CD8-positive, alpha-beta T cell (primary cell): ENCODE measurements at regions of chr12 and their contacts with region 1.

Region 1: DNA sequence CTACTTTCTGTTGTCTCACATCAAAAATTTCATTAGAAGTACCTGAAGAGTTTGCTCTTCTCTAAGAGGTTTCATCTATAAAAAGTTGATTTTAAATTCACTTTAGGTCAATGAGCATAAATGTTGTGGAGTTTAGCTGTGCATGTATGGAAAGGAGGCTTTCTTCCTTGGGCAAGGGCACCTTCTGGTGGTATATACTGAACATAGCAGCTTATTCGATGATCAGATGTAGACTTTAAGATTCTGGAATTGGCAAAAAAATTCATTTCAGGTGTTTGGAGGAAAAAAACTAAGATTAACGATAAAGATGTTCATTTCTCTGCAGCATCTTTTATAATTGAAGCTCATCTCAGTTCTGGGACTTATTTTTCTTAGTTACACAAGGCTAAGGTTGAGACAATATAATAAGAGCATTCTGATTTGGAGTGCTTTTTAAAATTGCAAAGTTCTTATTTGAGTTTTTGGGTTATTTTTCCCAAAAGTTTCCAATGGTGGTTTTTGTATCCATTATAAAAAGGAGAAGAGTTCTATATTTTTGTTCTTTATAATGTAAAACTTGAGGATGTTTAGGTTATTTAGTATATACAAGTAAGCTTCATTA is 46.8 kb downstream of the TMEM117 start:
- DNase-seq: peak in 5 of 9 experiments; percentile 9 to 72 (median 29)
- ATAC-seq: peak; percentile 96
- H3K4me3 ChIP-seq: no peak overlapping the region
- H3K4me3 Mint-ChIP-seq: no peak overlapping the region
- H3K27ac ChIP-seq: no peak overlapping the region
- H3K27ac Mint-ChIP-seq: no peak overlapping the region
- H3K4me1 ChIP-seq: no peaks in the 10 kb centered on the region
- H3K4me1 Mint-ChIP-seq: no peaks in the 10 kb centered on the region
- H3K27me3 ChIP-seq: no peaks in the 10 kb centered on the region
- H3K27me3 Mint-ChIP-seq: no peaks in the 10 kb centered on the region
- CTCF ChIP-seq: peak; percentile 94

Region 2: DNA sequence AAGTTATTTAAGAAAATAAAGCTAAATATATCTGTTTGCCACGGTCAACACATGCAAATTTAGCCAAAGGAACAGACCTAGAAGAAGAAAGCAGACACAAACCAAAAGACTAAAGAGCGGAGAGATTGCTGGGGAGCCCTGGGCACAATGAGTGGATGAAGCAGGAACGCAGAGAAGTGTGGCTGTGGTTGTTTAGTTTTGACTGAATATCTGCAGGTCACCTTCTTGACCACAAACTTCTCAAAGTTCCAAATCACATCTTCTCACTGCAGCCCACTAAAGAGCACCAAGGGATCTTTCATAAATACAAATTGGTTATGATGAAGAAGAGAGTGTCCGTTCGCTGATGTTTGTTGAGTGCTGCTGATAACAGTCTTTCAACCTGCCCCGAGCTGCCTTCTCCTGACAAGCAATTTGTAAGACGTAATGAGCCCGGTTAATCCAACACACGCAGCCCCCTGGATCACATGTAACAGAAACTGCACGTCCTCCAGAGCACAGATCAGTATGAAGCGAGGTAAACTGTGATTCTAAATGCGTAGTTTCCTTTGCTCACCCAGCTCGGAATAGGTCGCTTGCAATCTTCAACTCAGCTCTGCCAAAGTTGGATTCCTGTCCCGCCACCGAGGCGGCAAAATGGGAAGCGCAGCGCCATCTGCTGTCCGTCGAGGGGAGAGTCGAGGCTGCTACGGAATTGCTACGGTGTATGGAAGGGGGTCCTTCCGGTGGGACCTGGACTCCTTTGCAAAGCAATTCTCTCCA is 1858.8 kb before region 1 on chr12:
- CTCF ChIA-PET with region 1: no interaction called
- POLR2A ChIA-PET with region 1: no interaction called
- intact Hi-C with region 1: no loop called
- DNase-seq: peak; percentile 41 to 82 (median 66)
- ATAC-seq: peak; percentile 90
- H3K4me3 ChIP-seq: peak overlapping the region; percentile 32 to 47
- H3K4me3 Mint-ChIP-seq: peak overlapping the region; percentile 78
- H3K27ac ChIP-seq: no peak overlapping the region
- H3K27ac Mint-ChIP-seq: no peak overlapping the region
- H3K4me1 ChIP-seq: peaks cover 4% of the 10 kb centered on the region
- H3K4me1 Mint-ChIP-seq: peaks cover 9% of the 10 kb centered on the region
- H3K27me3 ChIP-seq: no peaks in the 10 kb centered on the region
- H3K27me3 Mint-ChIP-seq: peaks cover 24% of the 10 kb centered on the region
- CTCF ChIP-seq: peak; percentile 95

Region 3: GRCh38 chr12:42482445-42483237 is 1400.0 kb before region 1 on chr12:
- CTCF ChIA-PET with region 1: interaction called, 3 read pairs
- POLR2A ChIA-PET with region 1: no interaction called
- intact Hi-C with region 1: loop called in 1 of 2 experiments (anchors 2 kb)
- DNase-seq: peak in 7 of 9 experiments; percentile 6 to 63 (median 50)
- ATAC-seq: peak; percentile 51
- H3K4me3 ChIP-seq: peak overlapping the region; percentile 46 to 59
- H3K4me3 Mint-ChIP-seq: peak overlapping the region; percentile 78
- H3K27ac ChIP-seq: no peak overlapping the region
- H3K27ac Mint-ChIP-seq: no peak overlapping the region
- H3K4me1 ChIP-seq: peaks cover 7% of the 10 kb centered on the region
- H3K4me1 Mint-ChIP-seq: peaks cover 12% of the 10 kb centered on the region
- H3K27me3 ChIP-seq: peaks cover 4 to 25% of the 10 kb centered on the region in 2 experiments
- H3K27me3 Mint-ChIP-seq: peaks cover 69% of the 10 kb centered on the region
- CTCF ChIP-seq: peak; percentile 54

Region 4: DNA sequence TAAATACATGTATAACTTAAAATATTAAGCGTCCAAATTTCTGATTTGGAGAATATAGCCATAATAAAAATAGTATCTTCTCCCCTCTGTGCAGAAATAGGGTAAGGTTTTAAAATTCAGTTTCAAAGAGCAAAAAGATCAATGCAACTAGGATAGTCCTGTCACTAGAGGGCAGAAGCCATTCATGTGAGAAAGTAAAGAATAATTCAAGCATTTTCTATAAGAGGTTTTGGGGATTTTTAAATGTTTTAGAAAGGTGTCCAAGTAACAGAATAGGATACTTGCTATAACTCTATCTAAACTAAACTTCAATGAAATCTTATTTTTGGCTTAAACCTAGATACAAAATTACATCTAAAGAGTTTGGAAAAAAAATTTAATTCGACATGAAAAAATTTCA is 381.0 kb before region 1 on chr12:
- CTCF ChIA-PET with region 1: no interaction called
- POLR2A ChIA-PET with region 1: no interaction called
- intact Hi-C with region 1: loop called in 1 of 2 experiments (anchors 2 kb)
- DNase-seq: no peak
- ATAC-seq: no peak
- H3K4me3 ChIP-seq: no peak overlapping the region
- H3K4me3 Mint-ChIP-seq: no peak overlapping the region
- H3K27ac ChIP-seq: no peak overlapping the region
- H3K27ac Mint-ChIP-seq: no peak overlapping the region
- H3K4me1 ChIP-seq: no peaks in the 10 kb centered on the region
- H3K4me1 Mint-ChIP-seq: no peaks in the 10 kb centered on the region
- H3K27me3 ChIP-seq: no peaks in the 10 kb centered on the region
- H3K27me3 Mint-ChIP-seq: no peaks in the 10 kb centered on the region
- CTCF ChIP-seq: no peak

Region 5: DNA sequence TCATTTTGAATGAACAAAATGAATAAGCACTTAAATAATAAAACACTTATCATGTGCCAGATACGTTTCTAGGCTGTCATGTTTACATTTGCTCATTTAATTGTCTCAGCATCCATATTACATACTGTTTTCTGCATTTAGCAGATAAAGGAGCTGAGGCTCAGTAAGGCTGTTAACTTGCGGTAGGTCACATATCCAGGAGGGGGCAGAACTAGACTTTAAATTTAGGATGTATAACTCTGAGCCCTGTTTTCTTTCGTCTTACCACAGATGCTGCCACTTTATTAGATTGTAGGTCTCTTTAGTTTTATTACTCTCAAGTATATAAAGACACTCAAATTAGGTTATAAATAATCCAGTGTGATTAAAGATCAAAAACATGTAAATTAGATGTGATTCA is 106.2 kb before region 1 on chr12:
- CTCF ChIA-PET with region 1: interaction called, 50 read pairs
- POLR2A ChIA-PET with region 1: no interaction called
- intact Hi-C with region 1: loop called (anchors 1 kb)
- DNase-seq: peak in 2 of 9 experiments; percentile 47 to 56
- ATAC-seq: peak; percentile 80
- H3K4me3 ChIP-seq: no peak overlapping the region
- H3K4me3 Mint-ChIP-seq: no peak overlapping the region
- H3K27ac ChIP-seq: no peak overlapping the region
- H3K27ac Mint-ChIP-seq: no peak overlapping the region
- H3K4me1 ChIP-seq: no peaks in the 10 kb centered on the region
- H3K4me1 Mint-ChIP-seq: peaks cover 4% of the 10 kb centered on the region
- H3K27me3 ChIP-seq: no peaks in the 10 kb centered on the region
- H3K27me3 Mint-ChIP-seq: no peaks in the 10 kb centered on the region
- CTCF ChIP-seq: peak; percentile 56

Region 6: DNA sequence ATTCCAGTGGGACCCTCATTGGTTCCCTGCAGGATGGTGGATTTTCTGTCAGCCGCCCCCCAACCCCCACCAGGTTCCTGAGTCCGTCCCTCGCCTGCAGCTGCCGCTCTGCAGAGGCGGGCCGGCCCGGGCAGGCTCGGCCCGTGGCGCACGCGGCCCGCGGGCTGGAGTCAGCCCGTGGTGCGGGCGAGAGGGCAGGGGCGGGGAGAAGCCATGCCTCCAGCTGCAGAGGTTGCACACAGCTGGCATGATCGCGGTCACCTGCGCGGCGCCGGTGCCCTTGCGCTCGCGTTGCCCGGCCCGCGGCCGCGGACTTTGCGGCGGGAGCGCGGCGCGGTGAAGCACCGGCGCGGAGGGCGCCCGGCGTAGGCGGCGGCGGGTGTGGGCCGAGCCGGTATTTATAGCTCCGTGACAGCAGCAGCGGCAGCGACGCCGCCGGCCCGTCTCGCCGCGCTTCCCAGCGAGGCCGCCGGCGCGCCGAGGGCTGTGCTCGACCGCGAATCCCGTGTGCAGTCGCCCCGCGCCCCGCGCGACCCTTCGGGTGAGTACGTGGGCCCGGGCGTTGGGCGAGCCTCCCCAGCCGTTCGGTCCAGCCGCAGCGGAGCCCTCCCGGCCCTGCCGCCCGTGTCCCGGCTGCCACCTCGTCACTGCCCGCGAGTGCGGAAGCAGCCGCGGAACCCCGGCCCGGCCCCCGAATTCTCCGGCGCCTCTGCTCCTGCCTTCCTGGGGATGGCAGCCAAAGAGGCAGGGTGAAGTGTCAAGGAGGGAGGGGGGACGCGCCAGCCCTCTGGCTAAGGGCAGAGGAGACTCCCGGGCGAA is 46.8 kb before region 1 on chr12 and contains the start of gene TMEM117:
- CTCF ChIA-PET with region 1: interaction called, 4 read pairs
- POLR2A ChIA-PET with region 1: interaction called, 3 read pairs
- intact Hi-C with region 1: loop called in 1 of 2 experiments (anchors 2 kb)
- DNase-seq: peak; percentile 21 to 82 (median 65)
- ATAC-seq: peak; percentile 69
- H3K4me3 ChIP-seq: peak within 1 kb of the TSS; percentile 56 to 63
- H3K4me3 Mint-ChIP-seq: peak within 1 kb of the TSS; percentile 92
- H3K27ac ChIP-seq: peak within 1 kb of the TSS; percentile 64 to 78
- H3K27ac Mint-ChIP-seq: peak within 1 kb of the TSS; percentile 95
- H3K4me1 ChIP-seq: peaks cover 35% of the 10 kb centered on the region
- H3K4me1 Mint-ChIP-seq: peaks cover 52% of the 10 kb centered on the region
- H3K27me3 ChIP-seq: no peaks in the 10 kb centered on the region
- H3K27me3 Mint-ChIP-seq: no peaks in the 10 kb centered on the region
- CTCF ChIP-seq: no peak
- total RNA-seq, gene TMEM117: 3.5 to 4.0 TPM

Region 7: GRCh38 chr12:43893670-43894069 is 11.0 kb after region 1 on chr12:
- CTCF ChIA-PET with region 1: no interaction called
- POLR2A ChIA-PET with region 1: no interaction called
- intact Hi-C with region 1: no loop called
- DNase-seq: no peak
- ATAC-seq: no peak
- H3K4me3 ChIP-seq: no peak overlapping the region
- H3K4me3 Mint-ChIP-seq: no peak overlapping the region
- H3K27ac ChIP-seq: no peak overlapping the region
- H3K27ac Mint-ChIP-seq: no peak overlapping the region
- H3K4me1 ChIP-seq: no peaks in the 10 kb centered on the region
- H3K4me1 Mint-ChIP-seq: no peaks in the 10 kb centered on the region
- H3K27me3 ChIP-seq: no peaks in the 10 kb centered on the region
- H3K27me3 Mint-ChIP-seq: no peaks in the 10 kb centered on the region
- CTCF ChIP-seq: no peak